Mucosa of descending colon (tissue), 3 donors: ENCODE measurements at regions of chr17 and their contacts with region 1.

Region 1: GRCh38 chr17:4789901-4790704 is 1.3 kb downstream of the GLTPD2 start:
- DNase-seq: peak; percentile 89 to 93 (median 91)
- ATAC-seq: peak; percentile 94
- H3K4me3 ChIP-seq: peak overlapping the region; percentile 29
- H3K4me1 ChIP-seq: peaks cover 36% of the 10 kb centered on the region
- CTCF ChIP-seq: peak; percentile 93

Region 2: DNA sequence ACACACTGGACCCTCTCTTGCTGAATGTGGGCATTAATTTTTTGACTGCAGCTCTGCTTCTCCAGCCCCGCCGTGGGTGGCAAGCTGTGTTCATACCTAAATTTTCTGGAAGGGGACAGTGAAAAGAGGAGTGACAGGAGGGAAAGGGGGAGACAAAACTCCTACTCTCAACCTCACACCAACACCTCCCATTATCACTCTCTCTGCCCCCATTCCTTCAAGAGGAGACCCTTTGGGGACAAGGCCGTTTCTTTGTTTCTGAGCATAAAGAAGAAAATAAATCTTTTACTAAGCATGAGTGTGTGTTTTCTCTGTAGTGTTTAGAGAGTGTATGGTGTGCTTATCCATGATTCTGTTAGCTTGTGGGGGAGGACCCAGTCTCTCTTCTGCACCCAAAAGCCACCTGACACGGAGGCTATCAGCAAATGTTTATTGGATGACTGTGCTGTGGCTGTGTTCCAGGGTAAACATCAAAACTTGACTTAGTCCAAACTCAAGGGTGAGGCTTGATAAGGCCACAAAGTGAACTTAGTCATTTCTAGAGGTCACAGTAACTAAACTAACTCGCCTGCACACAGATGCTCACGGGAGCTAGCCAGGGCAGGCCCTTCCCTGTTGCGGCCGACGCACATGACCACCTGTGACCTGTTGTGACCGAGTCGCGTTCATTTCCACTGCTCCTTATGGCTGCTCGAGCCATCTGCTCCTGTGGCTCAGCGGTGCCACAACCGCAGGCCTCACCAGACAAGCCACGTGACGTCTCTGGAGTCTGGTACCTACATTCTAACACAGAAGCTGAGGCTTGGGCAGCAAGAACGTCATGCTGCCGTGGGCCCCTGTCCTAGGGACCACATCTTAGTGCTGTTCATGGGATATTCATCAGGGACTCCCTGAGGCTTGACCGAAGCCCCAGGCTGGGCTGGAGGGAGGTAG is 68.6 kb before region 1 on chr17:
- intact Hi-C with region 1: loop called in 1 of 2 experiments (anchors 10 kb)
- DNase-seq: peak; percentile 74 to 85 (median 85)
- ATAC-seq: peak; percentile 95
- H3K4me3 ChIP-seq: no peak overlapping the region
- H3K4me1 ChIP-seq: peaks cover 15% of the 10 kb centered on the region
- CTCF ChIP-seq: no peak

Region 3: DNA sequence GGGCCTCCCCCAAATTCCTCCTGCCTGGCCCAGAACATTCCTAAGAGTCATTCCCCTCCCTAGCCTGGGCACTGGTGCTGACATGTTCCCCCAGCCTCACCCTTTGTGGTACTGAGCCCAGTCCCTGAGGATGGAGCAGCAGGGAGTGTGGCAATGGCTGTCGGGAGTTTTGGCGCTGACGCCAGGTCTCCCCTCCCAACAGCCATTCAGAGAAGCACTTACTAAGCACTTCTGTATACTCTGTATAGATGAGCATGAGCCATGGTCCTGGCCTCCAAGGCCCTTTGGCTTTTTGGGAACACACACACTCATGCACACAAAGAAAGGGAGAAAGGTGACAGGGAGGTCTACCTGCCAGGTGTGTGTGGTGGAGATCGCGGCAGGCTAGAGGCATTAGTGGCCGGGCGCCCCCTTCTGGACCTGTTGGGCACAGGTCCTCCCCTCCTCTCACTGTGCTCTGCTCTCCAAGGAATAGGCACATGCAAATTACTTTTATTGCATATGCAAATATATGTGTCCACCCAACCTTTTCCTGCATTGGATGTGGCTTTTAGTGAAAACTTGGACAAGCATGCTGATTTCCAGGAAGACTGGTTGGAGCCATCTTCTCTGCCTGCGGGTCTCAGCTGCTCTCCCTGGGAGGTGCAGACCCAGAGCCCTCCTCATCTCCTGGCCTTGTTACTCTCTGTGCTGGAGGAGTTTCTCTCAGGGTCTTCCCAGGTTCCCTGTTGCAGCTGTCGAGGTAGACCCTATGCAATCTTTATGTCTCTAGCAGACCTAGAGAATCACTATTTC is 91.9 kb after region 1 on chr17:
- intact Hi-C with region 1: loop called (anchors 5 to 10 kb)
- DNase-seq: peak; percentile 74 to 89 (median 83)
- ATAC-seq: peak; percentile 95
- H3K4me3 ChIP-seq: no peak overlapping the region
- H3K4me1 ChIP-seq: no peaks in the 10 kb centered on the region
- CTCF ChIP-seq: peak; percentile 74